Mammary epithelial cell (primary cell): ENCODE measurements at regions of chr15 and their contacts with region 1.

Region 1: GRCh38 chr15:99704444-99704838 is 28.8 kb downstream of the LYSMD4 start:
- DNase-seq: peak; percentile 83
- H3K4me3 ChIP-seq: no peak overlapping the region
- H3K27ac ChIP-seq: no peak overlapping the region
- H3K4me1 ChIP-seq: peaks cover 39% of the 10 kb centered on the region
- H3K27me3 ChIP-seq: no peaks in the 10 kb centered on the region
- CTCF ChIP-seq: peak; percentile 78 to 85

Region 2: DNA sequence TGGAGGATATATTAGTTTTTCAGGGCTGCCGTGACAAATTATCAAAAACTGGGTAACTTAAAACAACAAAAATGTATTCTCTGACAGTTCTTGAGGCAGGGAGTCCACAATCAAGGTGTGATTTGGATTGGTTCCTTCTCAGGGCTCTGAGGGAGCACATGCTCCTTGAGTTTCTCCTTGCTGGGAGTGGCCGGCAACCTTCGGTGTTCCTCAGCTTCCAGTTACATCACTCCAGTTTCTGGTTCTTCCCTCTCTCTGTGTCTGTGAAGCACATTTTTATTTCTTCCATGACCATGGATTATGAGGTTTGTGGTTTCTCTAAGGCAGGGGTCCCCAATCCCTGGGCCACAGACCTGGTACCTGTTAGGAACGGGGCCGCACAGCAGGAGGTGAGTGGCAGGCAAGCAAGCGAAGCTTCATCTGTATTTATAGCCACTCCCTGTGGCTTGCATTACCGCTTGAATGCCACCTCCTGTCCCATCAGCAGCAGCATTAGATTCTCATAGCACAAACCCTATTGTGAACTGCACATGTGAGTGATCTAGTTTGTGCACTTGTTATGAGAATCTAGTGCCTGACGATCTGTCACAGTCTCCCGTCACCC is 428.8 kb before region 1 on chr15:
- CTCF ChIA-PET with region 1: interaction called, 9 read pairs
- dilution Hi-C with region 1: loop called (anchors 25 kb)
- in situ Hi-C with region 1: loop called in 1 of 2 experiments (anchors 10 kb)
- intact Hi-C with region 1: loop called (anchors 1 kb)
- DNase-seq: no peak
- H3K4me3 ChIP-seq: no peak overlapping the region
- H3K27ac ChIP-seq: no peak overlapping the region
- H3K4me1 ChIP-seq: no peaks in the 10 kb centered on the region
- H3K27me3 ChIP-seq: no peaks in the 10 kb centered on the region
- CTCF ChIP-seq: no peak

Region 3: DNA sequence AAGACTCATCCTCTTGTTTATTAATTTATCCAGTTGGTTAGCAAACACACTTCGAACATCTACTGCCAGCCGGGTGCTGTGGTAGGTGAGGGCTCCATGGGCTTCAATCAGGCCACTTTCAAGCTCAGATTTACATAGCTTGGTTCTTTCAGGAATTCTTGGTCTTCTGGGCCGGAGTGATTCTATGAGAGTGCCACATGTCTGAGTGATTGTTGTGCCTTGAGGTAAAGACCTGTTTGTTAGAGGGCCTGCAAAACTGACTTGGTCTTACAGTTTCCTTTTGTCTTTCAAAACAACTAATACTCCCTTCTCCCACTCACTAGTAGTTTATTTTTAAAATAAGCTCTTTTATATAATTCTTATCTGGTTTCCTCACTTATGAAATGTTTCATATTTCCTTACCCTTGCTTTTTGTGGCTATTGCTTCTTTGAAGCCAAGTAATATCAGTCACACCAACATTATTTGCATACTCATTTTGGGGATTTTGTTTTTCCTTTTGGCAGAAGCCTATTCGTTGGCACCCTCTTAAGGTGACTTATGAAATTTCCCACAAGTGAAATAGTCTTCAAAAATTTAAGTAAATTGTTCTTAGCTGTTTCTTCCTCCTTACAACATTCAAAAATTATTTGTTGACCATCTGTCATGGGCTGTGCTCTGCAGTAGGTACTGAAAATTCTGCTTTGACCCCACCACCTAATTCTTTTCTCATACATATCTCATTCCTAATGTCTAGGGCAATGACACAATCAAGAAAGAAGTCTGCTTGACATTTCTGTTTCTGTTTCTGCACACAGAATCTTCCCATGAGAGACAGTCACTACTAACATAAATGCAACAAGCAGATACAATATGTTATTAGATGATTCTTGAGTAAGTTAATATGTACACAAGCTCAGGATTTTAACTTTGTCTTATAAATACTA is 333.0 kb before region 1 on chr15:
- CTCF ChIA-PET with region 1: interaction called, 9 read pairs
- dilution Hi-C with region 1: no loop called
- in situ Hi-C with region 1: no loop called
- intact Hi-C with region 1: loop called (anchors 5 kb)
- DNase-seq: peak; percentile 6
- H3K4me3 ChIP-seq: no peak overlapping the region
- H3K27ac ChIP-seq: no peak overlapping the region
- H3K4me1 ChIP-seq: no peaks in the 10 kb centered on the region
- H3K27me3 ChIP-seq: no peaks in the 10 kb centered on the region
- CTCF ChIP-seq: peak in 1 of 2 donors; percentile 34

Region 4: DNA sequence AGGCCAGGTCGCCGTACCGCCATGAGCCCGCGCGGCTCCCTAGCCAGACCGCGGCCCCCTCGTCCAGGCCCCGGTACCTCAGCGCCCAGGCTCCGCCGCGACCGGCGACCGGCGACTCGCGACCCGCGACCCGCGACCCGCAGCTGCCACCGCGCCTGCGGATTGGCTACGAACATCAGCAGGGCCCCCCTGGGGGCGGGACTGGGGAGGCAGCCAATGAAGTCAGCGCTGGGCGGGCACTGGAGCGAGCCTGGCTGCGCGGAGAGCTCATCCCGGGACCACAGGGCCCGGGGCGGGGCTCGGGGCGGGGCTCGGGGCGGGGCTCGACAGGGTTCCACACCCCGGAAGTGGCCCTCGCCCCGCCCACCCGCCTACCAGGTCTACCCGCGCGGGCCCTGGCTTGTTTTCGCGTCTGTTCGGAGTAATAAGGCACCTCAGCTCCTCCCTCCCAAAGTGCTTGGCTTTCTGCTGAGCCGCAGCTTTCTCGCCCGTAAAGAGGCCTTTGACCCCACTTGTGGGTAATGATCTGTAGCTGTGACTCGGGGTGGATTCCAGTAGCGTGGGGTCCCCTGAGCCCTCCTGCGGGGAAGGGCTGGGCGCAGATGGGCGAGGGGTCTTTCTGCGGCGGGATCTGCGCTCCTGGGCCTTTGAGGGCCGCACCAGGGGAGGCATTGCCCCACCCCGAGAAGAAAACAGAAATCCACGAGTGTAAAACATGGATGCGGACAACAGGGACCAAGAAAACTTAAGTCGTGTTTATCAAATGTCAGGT is 29.0 kb after region 1 on chr15 and contains the start of gene LYSMD4:
- CTCF ChIA-PET with region 1: interaction called, 26 read pairs
- dilution Hi-C with region 1: no loop called
- in situ Hi-C with region 1: no loop called
- intact Hi-C with region 1: loop called (anchors 1 kb)
- DNase-seq: peak; percentile 91
- H3K4me3 ChIP-seq: peak within 1 kb of the TSS; percentile 64 to 82 (median 70)
- H3K27ac ChIP-seq: peak within 1 kb of the TSS; percentile 47
- H3K4me1 ChIP-seq: peaks cover 28% of the 10 kb centered on the region
- H3K27me3 ChIP-seq: no peaks in the 10 kb centered on the region
- CTCF ChIP-seq: no peak
- total RNA-seq, gene LYSMD4: 10.9 to 20.5 TPM